ENCODE measurements at regions of chr17 and their contacts with region 1.

Region 1: GRCh38 chr17:81927653-81928543 is at the start of gene MAFG:
- DNase-seq: peak; percentile 94
- ATAC-seq: peak; percentile 62
- H3K4me3 Mint-ChIP-seq: peak within 1 kb of the TSS; percentile 85
- H3K27ac Mint-ChIP-seq: peak within 1 kb of the TSS; percentile 85
- H3K4me1 Mint-ChIP-seq: peaks cover 32% of the 10 kb centered on the region
- H3K27me3 Mint-ChIP-seq: peaks cover 2% of the 10 kb centered on the region
- total RNA-seq, gene MAFG: 15.3 to 18.3 TPM

Region 2: GRCh38 chr17:81711814-81712467 is 216.0 kb before region 1 on chr17 and contains the start of gene SLC25A10:
- CTCF ChIA-PET with region 1: no interaction called
- POLR2A ChIA-PET with region 1: no interaction called
- intact Hi-C with region 1: loop called in 1 of 2 experiments (anchors 1 kb)
- DNase-seq: peak; percentile 93
- ATAC-seq: peak; percentile 87
- H3K4me3 Mint-ChIP-seq: peak within 1 kb of the TSS; percentile 89
- H3K27ac Mint-ChIP-seq: peak within 1 kb of the TSS; percentile 84
- H3K4me1 Mint-ChIP-seq: peaks cover 24% of the 10 kb centered on the region
- H3K27me3 Mint-ChIP-seq: no peaks in the 10 kb centered on the region
- total RNA-seq, gene SLC25A10: 28.6 to 31.8 TPM

Region 3: DNA sequence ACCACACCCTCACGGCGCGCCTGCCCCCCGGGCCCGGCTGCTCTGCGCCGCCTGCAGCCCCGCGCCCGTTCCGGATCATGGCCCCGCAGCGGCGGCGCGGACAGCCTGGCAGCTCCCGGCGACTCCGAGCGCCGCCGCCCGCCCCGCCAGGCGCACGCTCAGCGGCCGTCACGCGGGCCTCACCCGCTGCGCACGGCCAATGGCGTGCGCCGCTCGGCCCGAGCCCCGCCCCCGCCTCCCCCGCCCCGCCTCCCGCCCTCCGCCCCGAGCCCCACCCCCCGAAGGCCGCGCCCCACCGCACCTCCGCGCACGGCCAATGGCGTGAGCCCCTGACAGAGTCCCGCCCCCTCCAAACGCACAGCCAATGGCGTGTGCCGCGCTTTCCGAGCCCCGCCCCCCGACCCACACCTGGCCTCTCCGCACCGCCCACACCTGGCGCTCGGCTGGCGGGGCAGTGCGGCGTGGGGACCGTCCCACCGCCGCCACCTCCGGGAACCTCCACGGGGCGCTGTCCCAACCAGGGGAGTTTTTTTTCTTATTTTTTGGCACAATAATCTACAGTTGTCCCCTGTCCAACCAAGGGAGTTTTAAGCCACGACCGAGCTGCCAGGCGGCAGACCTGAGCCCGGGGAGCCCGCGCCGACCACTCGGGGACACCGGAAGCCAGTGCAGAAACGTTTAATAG is 16.5 kb before region 1 on chr17 and contains the start of gene PCYT2:
- CTCF ChIA-PET with region 1: interaction called, 3 read pairs
- POLR2A ChIA-PET with region 1: no interaction called
- intact Hi-C with region 1: loop called (anchors 1 to 2 kb)
- DNase-seq: peak; percentile 97
- ATAC-seq: peak; percentile 96
- H3K4me3 Mint-ChIP-seq: peak within 1 kb of the TSS; percentile 79
- H3K27ac Mint-ChIP-seq: no peak within 1 kb of the TSS
- H3K4me1 Mint-ChIP-seq: peaks cover 14% of the 10 kb centered on the region
- H3K27me3 Mint-ChIP-seq: no peaks in the 10 kb centered on the region
- total RNA-seq, gene PCYT2: 19.7 to 24.0 TPM

Region 4: GRCh38 chr17:81941790-81942553 is 14.1 kb after region 1 on chr17:
- CTCF ChIA-PET with region 1: interaction called, 3 read pairs
- POLR2A ChIA-PET with region 1: interaction called, 3 read pairs
- intact Hi-C with region 1: loop called in 1 of 2 experiments (anchors 1 kb)
- DNase-seq: no peak
- ATAC-seq: no peak
- H3K4me3 Mint-ChIP-seq: no peak overlapping the region
- H3K27ac Mint-ChIP-seq: no peak overlapping the region
- H3K4me1 Mint-ChIP-seq: peaks cover 5% of the 10 kb centered on the region
- H3K27me3 Mint-ChIP-seq: peaks cover 5% of the 10 kb centered on the region

Region 5: GRCh38 chr17:82120148-82120547 is 192.2 kb after region 1 on chr17:
- CTCF ChIA-PET with region 1: no interaction called
- POLR2A ChIA-PET with region 1: no interaction called
- intact Hi-C with region 1: no loop called
- DNase-seq: peak; percentile 68
- ATAC-seq: peak; percentile 96
- H3K4me3 Mint-ChIP-seq: no peak overlapping the region
- H3K27ac Mint-ChIP-seq: peak overlapping the region; percentile 82
- H3K4me1 Mint-ChIP-seq: peaks cover 43% of the 10 kb centered on the region
- H3K27me3 Mint-ChIP-seq: no peaks in the 10 kb centered on the region

Region 6: DNA sequence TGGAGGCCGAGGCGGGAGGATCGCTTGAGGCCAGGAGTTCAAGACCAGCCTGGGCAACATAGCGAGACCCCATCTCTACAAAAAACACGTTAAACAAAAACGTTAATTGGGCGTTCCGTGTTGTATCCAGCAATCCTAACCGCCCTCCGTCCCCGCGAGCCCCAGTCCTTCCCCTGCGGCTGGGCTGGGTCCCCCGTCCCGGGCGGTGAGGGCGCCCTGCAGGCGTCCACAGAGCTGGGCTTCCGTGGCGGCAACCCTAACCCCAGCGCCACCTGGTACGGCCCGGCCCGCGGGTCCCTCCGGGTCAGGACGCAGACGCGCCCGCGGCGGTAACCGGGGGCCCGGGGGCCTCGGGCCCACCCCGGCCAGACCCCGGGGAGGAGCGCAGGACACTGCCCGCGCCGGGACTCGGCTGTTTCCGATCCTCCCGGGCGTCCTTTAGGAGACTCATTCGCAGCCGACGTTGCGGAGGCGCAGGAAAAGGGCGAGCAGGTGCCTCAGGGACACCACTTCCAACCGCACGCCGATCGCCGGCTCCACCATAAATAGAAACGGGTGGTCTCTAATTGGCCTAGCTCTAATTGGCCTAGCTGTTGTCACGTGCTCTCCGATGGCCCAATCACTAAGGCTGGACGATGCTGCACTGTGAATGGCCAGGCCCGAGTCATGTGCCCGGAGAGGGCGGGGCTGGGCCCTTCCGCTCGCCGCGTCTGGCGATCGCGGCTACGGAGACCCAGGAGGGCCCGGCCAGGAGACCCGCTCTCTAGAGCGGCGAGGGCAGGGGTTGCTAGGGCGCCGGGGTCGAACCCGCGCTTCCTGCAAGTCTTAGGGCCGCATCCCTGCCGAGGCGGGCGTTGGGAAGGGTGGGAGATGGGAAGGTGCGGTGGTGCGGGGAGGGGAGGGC is 364.6 kb after region 1 on chr17:
- CTCF ChIA-PET with region 1: no interaction called
- POLR2A ChIA-PET with region 1: no interaction called
- intact Hi-C with region 1: loop called in 1 of 2 experiments (anchors 10 kb)
- DNase-seq: peak; percentile 96
- ATAC-seq: peak; percentile 89
- H3K4me3 Mint-ChIP-seq: peak overlapping the region; percentile 78
- H3K27ac Mint-ChIP-seq: peak overlapping the region; percentile 85
- H3K4me1 Mint-ChIP-seq: peaks cover 71% of the 10 kb centered on the region
- H3K27me3 Mint-ChIP-seq: no peaks in the 10 kb centered on the region

Measured in activated CD4-positive, alpha-beta T cell treated with anti-CD3 and anti-CD28 coated beads for 36 hours (primary cell).